ENCODE measurements at regions of chr6 and their contacts with region 1.

Region 1: DNA sequence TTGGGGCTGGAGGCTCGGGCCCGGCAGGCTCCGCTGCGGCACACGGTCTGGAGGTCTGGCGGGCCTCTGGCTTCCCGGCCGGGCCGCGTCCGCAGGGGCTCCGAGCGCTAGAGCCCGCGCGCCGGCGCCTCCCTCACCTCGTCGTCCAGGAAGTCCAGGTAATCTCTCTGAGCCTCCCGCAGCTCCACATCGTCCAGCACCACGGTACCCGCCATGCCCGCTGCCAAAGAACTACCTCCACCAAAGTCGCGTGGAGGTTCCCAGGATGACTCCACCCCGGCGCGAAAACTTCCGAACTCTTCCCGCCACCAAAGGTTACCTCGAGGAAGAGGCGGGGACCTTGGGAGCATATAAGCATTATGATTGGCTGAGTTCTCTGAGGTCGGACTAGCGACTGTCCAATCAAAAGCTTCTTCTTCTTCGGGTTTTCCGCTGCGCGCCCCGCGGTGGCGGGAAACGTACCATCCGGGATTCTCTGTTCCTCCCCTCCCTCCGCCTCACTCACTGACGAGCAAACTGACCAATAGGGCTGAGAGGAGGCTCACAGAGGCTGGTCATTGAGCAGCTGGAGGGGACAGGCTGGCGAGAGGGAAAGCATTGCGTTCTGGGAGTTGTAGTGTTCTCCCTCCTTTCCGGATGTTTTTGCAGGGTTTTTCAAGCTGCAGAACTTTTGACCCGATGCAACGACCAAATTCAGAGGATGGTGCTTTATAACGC is at the start of gene MCM3:
- DNase-seq: peak; percentile 97 to 98 (median 98)
- ATAC-seq: peak; percentile 100
- H3K4me3 ChIP-seq: peak within 1 kb of the TSS; percentile 99
- H3K27ac ChIP-seq: peak within 1 kb of the TSS; percentile 58
- H3K4me1 ChIP-seq: no peaks in the 10 kb centered on the region
- H3K27me3 ChIP-seq: no peaks in the 10 kb centered on the region
- total RNA-seq, gene MCM3: 22.4 to 31.4 (median 25.6) TPM

Region 2: GRCh38 chr6:51830666-51831065 is 454.0 kb before region 1 on chr6:
- intact Hi-C with region 1: no loop called
- DNase-seq: no peak
- ATAC-seq: no peak
- H3K4me3 ChIP-seq: no peak overlapping the region
- H3K27ac ChIP-seq: no peak overlapping the region
- H3K4me1 ChIP-seq: no peaks in the 10 kb centered on the region
- H3K27me3 ChIP-seq: no peaks in the 10 kb centered on the region

Region 3: DNA sequence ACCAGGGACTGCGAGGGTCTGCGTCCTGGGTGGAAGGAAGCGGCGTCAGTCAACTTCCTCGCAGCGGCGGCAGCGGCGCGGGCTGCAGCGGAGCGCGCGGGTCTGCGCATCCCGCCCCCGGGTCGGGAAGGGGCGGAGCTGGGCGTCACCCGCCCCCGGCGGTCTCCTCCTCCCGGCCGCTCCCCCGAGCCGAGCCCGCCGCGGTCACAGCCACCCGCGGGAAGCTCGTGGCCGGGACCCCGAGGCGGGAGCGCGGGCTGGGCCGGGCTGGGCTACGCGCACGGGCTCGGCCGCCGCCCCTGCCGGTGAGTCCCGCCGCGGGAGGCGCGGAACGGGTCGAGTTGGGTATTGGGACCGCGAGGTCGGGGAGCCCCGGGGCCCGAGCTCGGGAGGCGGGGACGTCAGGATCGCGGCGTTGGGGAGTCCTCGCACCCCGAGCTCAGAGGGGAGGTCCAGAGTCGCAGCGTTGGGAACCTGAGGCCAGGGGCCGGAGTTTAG is 77.4 kb after region 1 on chr6 and contains the start of gene PAQR8:
- intact Hi-C with region 1: loop called in 1 of 4 experiments (anchors 5 kb)
- DNase-seq: peak; percentile 81 to 94 (median 93)
- ATAC-seq: peak; percentile 98 to 99
- H3K4me3 ChIP-seq: peak within 1 kb of the TSS; percentile 77
- H3K27ac ChIP-seq: peak within 1 kb of the TSS; percentile 82
- H3K4me1 ChIP-seq: no peaks in the 10 kb centered on the region
- H3K27me3 ChIP-seq: no peaks in the 10 kb centered on the region
- total RNA-seq, gene PAQR8: 4.5 to 6.2 (median 5.4) TPM

Region 4: DNA sequence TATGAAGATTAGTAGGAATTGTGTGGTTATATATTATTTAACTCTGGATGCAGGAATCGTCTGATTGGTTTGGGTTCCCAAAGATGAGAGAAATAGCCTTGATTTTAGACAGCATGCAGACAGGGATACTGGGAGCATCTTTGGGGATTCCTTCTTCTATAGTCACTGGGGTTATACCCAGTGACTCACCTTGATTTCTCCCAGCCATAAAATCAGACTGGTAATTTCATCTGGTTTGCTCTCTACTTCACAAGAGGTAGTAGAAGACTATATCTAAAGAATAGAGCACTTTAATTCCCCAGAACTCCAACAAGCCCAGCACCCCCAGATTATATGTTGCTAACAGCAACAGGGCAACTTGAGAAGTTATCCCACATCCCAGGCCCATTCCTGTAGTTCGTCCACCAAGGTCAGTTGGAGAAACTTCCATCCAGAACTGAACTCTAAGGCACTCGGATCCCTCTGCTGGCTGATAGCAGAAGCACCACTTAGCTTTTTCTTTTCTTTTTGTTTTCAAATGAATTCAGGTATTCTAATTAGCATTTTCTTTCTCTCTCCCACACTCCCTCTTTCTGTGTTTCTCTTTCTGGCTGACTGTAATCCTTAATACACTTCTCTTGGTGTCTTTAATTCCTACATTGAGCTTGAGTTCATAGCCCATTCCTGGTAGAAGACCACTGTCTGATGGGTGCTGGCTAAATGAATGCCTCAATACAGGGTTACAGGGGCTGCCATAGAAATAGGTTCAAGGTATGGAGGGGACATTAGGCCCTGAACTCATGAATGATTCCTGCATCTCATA is 115.1 kb after region 1 on chr6:
- intact Hi-C with region 1: loop called in 3 of 4 experiments (anchors 2 to 5 kb)
- DNase-seq: peak in 1 of 3 donors; percentile 30
- ATAC-seq: peak; percentile 63 to 68
- H3K4me3 ChIP-seq: no peak overlapping the region
- H3K27ac ChIP-seq: no peak overlapping the region
- H3K4me1 ChIP-seq: no peaks in the 10 kb centered on the region
- H3K27me3 ChIP-seq: no peaks in the 10 kb centered on the region

Region 5: DNA sequence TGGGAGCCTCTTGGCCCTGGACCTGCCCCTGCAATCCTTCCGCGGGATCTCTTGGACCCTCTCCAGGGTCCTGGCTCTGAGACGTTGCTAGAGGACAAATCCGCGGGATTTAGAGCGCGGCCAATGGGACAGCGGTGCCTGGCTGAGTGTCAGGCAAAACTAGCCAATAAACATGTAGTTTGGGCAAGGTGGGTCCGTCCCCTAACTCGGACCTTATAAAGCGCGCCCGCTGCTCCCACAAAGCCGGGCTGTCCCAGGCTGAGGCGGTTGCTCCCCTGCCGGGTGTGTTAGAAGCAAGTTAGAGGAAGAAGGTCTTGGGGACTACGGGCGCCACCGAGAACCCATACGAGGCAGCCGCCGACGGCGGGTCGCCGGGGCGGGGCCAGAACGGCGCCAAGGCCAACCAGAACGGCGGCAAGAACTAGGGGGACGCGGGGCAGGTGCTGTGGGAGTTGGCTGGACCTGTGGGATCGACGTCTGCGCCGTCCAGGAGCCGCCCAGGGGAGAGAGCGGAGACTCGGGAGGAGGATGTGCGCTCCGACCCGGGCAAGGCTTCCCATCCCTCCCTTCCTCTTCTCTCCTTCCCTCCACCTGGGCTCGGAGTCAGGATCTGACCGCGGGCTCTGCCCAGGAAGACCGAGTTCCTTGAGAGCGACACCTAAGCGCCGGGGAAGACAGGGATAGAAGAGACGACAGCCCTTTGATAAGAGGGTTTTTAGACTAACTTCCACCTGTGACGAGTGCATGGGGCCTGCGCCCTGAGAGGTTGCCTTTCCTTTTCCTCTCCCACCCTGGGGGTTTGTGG is 379.8 kb after region 1 on chr6:
- intact Hi-C with region 1: loop called in 1 of 4 experiments (anchors 10 kb)
- DNase-seq: peak; percentile 89 to 96 (median 94)
- ATAC-seq: peak; percentile 99
- H3K4me3 ChIP-seq: peak overlapping the region; percentile 87
- H3K27ac ChIP-seq: peak overlapping the region; percentile 71
- H3K4me1 ChIP-seq: peaks cover 8% of the 10 kb centered on the region
- H3K27me3 ChIP-seq: no peaks in the 10 kb centered on the region

Region 6: GRCh38 chr6:52670502-52671409 is 386.1 kb after region 1 on chr6 and contains the start of gene TMEM14A:
- intact Hi-C with region 1: loop called in 2 of 4 experiments (anchors 5 to 10 kb)
- DNase-seq: peak; percentile 97 to 99 (median 97)
- ATAC-seq: peak; percentile 99 to 100
- H3K4me3 ChIP-seq: peak within 1 kb of the TSS; percentile 43
- H3K27ac ChIP-seq: no peak within 1 kb of the TSS
- H3K4me1 ChIP-seq: no peaks in the 10 kb centered on the region
- H3K27me3 ChIP-seq: no peaks in the 10 kb centered on the region
- total RNA-seq, gene TMEM14A: 8.7 to 15.4 (median 13.5) TPM

Region 7: GRCh38 chr6:52995913-52996645 is 711.5 kb after region 1 on chr6:
- intact Hi-C with region 1: loop called in 1 of 4 experiments (anchors 5 kb)
- DNase-seq: peak; percentile 49 to 78 (median 58)
- ATAC-seq: peak in 1 of 2 donors; percentile 18
- H3K4me3 ChIP-seq: peak overlapping the region; percentile 39
- H3K27ac ChIP-seq: peak overlapping the region; percentile 65
- H3K4me1 ChIP-seq: no peaks in the 10 kb centered on the region
- H3K27me3 ChIP-seq: no peaks in the 10 kb centered on the region

Measured in right cardiac atrium (tissue), 5 donors.